GM12878 (cell line): ENCODE measurements at regions of chr2 and their contacts with region 1.

Region 1: GRCh38 chr2:171086352-171087290 is 74.1 kb downstream of the TLK1 start:
- DNase-seq: peak; percentile 9
- ATAC-seq: peak; percentile 91
- H3K4me3 ChIP-seq: no peak overlapping the region
- H3K27ac ChIP-seq: peak overlapping the region; percentile 17; the same call in 1 of the 2 replicates
- H3K4me1 ChIP-seq: no peaks in the 10 kb centered on the region; the same call in 1 of the 2 replicates
- H3K27me3 ChIP-seq: no peaks in the 10 kb centered on the region
- CTCF ChIP-seq: peak; percentile 45 to 64 (median 63)
- EP300 ChIP-seq: no peak
- POLR2A ChIP-seq: no peak
- RAD21 ChIP-seq: 0 out of 2 replicates have a peak, but pooled peaks have one; percentile 8

Region 2: GRCh38 chr2:170265321-170265720 is 821.3 kb before region 1 on chr2:
- CTCF ChIA-PET with region 1: no interaction called
- POLR2A ChIA-PET with region 1: no interaction called
- RAD21 ChIA-PET with region 1: no interaction called
- SMC1A ChIA-PET with region 1: no interaction called
- in situ Hi-C with region 1: no loop called
- intact Hi-C with region 1: no loop called
- DNase-seq: no peak
- ATAC-seq: no peak
- H3K4me3 ChIP-seq: no peak overlapping the region
- H3K27ac ChIP-seq: no peak overlapping the region
- H3K4me1 ChIP-seq: no peaks in the 10 kb centered on the region
- H3K27me3 ChIP-seq: no peaks in the 10 kb centered on the region
- CTCF ChIP-seq: no peak
- EP300 ChIP-seq: no peak
- POLR2A ChIP-seq: no peak
- RAD21 ChIP-seq: no peak

Region 3: DNA sequence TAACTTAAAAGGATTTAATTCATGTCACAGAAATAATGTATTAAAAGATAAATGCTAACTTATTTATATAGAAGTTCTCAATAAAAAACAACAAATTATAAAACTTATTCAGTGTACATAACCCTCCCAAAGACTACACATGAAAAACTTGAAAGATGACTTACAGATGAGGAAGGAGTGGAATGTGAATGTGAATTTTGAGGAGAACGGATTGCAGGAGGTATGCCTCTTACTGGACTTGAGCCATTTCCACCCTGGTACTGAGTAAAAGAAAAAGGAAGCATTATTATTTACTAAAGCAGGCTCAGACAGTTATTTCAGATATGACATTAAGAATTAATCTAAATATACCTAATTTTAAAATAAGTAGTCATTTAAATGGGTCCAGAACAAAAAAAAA is 30.3 kb before region 1 on chr2:
- CTCF ChIA-PET with region 1: interaction called, 13 read pairs
- POLR2A ChIA-PET with region 1: no interaction called
- RAD21 ChIA-PET with region 1: no interaction called
- SMC1A ChIA-PET with region 1: no interaction called
- in situ Hi-C with region 1: no loop called
- intact Hi-C with region 1: no loop called
- DNase-seq: no peak
- ATAC-seq: no peak
- H3K4me3 ChIP-seq: no peak overlapping the region
- H3K27ac ChIP-seq: no peak overlapping the region
- H3K4me1 ChIP-seq: no peaks in the 10 kb centered on the region
- H3K27me3 ChIP-seq: no peaks in the 10 kb centered on the region
- CTCF ChIP-seq: no peak
- EP300 ChIP-seq: no peak
- POLR2A ChIP-seq: no peak
- RAD21 ChIP-seq: no peak

Region 4: GRCh38 chr2:171069286-171069956 is 17.2 kb before region 1 on chr2:
- CTCF ChIA-PET with region 1: interaction called, 23 read pairs
- POLR2A ChIA-PET with region 1: interaction called, 3 read pairs
- RAD21 ChIA-PET with region 1: no interaction called
- SMC1A ChIA-PET with region 1: interaction called, 12 read pairs
- in situ Hi-C with region 1: no loop called
- intact Hi-C with region 1: no loop called
- DNase-seq: no peak
- ATAC-seq: no peak
- H3K4me3 ChIP-seq: no peak overlapping the region
- H3K27ac ChIP-seq: no peak overlapping the region
- H3K4me1 ChIP-seq: no peaks in the 10 kb centered on the region
- H3K27me3 ChIP-seq: no peaks in the 10 kb centered on the region
- CTCF ChIP-seq: no peak
- EP300 ChIP-seq: no peak
- POLR2A ChIP-seq: no peak
- RAD21 ChIP-seq: no peak

Region 5: DNA sequence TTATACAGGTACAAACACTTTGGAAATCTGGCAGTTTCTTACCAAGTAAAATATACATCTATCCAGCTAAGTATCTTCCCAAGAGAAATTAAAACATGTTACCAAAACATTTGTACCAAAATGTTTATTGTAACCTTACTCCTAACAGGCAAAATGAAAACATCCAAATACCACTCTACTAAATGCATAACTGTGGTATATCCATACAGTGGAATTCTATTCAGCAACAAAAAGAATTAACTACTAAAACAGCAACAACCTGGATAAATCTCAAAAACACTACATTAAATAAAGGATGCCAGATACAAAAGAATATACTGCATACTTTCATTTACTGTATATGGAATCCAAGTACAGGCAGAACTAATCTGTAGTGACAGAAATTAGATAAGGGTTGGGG is 22.9 kb after region 1 on chr2:
- CTCF ChIA-PET with region 1: interaction called, 12 read pairs
- POLR2A ChIA-PET with region 1: interaction called, 3 read pairs
- RAD21 ChIA-PET with region 1: interaction called, 4 read pairs
- SMC1A ChIA-PET with region 1: interaction called, 6 read pairs
- in situ Hi-C with region 1: no loop called
- intact Hi-C with region 1: no loop called
- DNase-seq: no peak
- ATAC-seq: no peak
- H3K4me3 ChIP-seq: no peak overlapping the region
- H3K27ac ChIP-seq: no peak overlapping the region
- H3K4me1 ChIP-seq: no peaks in the 10 kb centered on the region
- H3K27me3 ChIP-seq: no peaks in the 10 kb centered on the region
- CTCF ChIP-seq: no peak
- EP300 ChIP-seq: no peak
- POLR2A ChIP-seq: no peak
- RAD21 ChIP-seq: no peak

Region 6: GRCh38 chr2:171136024-171136423 is 49.4 kb after region 1 on chr2:
- CTCF ChIA-PET with region 1: interaction called, 11 read pairs
- POLR2A ChIA-PET with region 1: no interaction called
- RAD21 ChIA-PET with region 1: interaction called, 4 read pairs
- SMC1A ChIA-PET with region 1: interaction called, 12 read pairs
- in situ Hi-C with region 1: no loop called
- intact Hi-C with region 1: no loop called
- DNase-seq: peak; percentile 62
- ATAC-seq: peak; percentile 91
- H3K4me3 ChIP-seq: no peak overlapping the region
- H3K27ac ChIP-seq: peak overlapping the region; percentile 69
- H3K4me1 ChIP-seq: peaks cover 28% of the 10 kb centered on the region
- H3K27me3 ChIP-seq: no peaks in the 10 kb centered on the region
- CTCF ChIP-seq: no peak
- EP300 ChIP-seq: no peak
- POLR2A ChIP-seq: no peak
- RAD21 ChIP-seq: no peak

Region 7: DNA sequence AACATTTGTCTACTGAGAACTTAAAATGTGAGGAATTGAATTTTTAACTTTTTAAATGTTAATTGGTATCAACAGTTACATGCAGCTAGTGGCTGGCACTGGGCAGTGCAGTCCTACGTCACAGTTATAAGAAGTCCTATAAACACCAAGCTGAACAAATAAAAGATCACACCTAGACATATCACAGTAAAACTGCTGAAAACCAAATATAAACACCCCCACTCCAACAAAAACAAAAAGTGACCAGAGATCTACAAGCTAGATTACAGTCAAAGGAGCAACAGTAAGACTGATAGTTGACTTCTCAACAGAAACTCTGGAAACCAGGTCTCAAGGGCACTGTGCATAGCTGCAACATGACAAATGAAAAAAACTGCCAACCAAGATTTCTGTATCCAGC is 54.7 kb after region 1 on chr2:
- CTCF ChIA-PET with region 1: interaction called, 11 read pairs
- POLR2A ChIA-PET with region 1: no interaction called
- RAD21 ChIA-PET with region 1: interaction called, 4 read pairs
- SMC1A ChIA-PET with region 1: interaction called, 3 read pairs
- in situ Hi-C with region 1: no loop called
- intact Hi-C with region 1: no loop called
- DNase-seq: no peak
- ATAC-seq: peak; percentile 61
- H3K4me3 ChIP-seq: no peak overlapping the region
- H3K27ac ChIP-seq: no peak overlapping the region
- H3K4me1 ChIP-seq: peaks cover 29% of the 10 kb centered on the region; the same call in 1 of the 2 replicates
- H3K27me3 ChIP-seq: no peaks in the 10 kb centered on the region
- CTCF ChIP-seq: peak in 1 of 3 experiments; percentile 14; a peak in 1 of 6 replicates
- EP300 ChIP-seq: no peak
- POLR2A ChIP-seq: no peak
- RAD21 ChIP-seq: no peak

Region 8: DNA sequence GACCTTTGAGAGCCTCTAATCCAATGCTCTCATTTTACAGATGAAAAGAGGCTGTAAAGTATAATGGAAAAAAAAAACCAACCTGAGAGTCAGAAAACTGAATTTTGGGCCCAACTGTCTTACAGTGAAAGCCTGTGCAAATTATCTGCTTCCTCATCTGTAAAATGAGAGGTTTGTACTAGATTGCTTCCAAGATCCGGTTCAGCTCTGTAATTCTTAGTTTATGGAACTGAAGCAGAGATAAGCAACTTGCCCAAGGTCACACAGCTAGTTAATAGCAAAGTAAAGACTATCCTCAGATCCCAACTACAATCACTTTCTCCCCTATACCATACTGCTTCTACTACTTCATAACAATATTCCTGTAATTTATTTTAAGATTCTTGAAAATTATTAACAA is 67.7 kb after region 1 on chr2:
- CTCF ChIA-PET with region 1: interaction called, 62 read pairs
- POLR2A ChIA-PET with region 1: no interaction called
- RAD21 ChIA-PET with region 1: interaction called, 15 read pairs
- SMC1A ChIA-PET with region 1: interaction called, 70 read pairs
- in situ Hi-C with region 1: no loop called
- intact Hi-C with region 1: loop called (anchors 5 kb)
- DNase-seq: no peak
- ATAC-seq: peak; percentile 27
- H3K4me3 ChIP-seq: peak overlapping the region; percentile 22
- H3K27ac ChIP-seq: peak overlapping the region; percentile 68
- H3K4me1 ChIP-seq: peaks cover 14% of the 10 kb centered on the region
- H3K27me3 ChIP-seq: no peaks in the 10 kb centered on the region
- CTCF ChIP-seq: no peak
- EP300 ChIP-seq: no peak
- POLR2A ChIP-seq: no peak
- RAD21 ChIP-seq: no peak